ENCODE measurements at regions of chr15 and their contacts with region 1.

Region 1: GRCh38 chr15:74240002-74240568 is 4.0 kb downstream of the CCDC33 start:
- DNase-seq: peak; percentile 92
- H3K4me3 ChIP-seq: no peak overlapping the region
- H3K27ac ChIP-seq: peak overlapping the region; percentile 13
- H3K4me1 ChIP-seq: peaks cover 11% of the 10 kb centered on the region
- H3K27me3 ChIP-seq: no peaks in the 10 kb centered on the region
- CTCF ChIP-seq: peak; percentile 65 to 80
- POLR2A ChIP-seq: no peak

Region 2: DNA sequence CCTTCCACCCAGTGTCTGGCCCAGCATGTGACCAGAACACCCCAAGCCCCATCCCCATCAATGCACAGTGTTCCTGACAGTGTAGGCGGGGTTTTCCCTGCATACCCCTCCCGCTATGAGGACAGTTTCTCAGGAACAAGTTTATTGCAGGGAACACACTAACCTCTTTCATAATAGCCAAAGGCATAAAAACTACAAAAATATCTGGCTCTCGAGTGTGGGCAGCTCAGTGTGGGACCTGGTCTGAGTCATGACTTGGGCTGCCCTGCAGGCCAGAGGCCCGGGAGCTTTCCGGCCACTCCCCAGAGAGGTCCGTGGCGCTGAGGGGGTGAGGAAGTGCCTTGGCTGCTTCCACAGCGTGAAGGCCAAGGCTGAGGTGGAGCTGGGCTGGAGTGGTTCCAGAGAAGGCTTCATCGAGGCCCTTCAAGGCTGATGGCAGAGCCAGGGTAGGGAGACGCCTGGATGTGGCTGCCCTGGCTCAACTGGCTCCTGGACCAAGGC is 60.7 kb before region 1 on chr15:
- CTCF ChIA-PET with region 1: interaction called, 4 read pairs
- POLR2A ChIA-PET with region 1: no interaction called
- dilution Hi-C with region 1: no loop called
- intact Hi-C with region 1: loop called (anchors 5 kb)
- DNase-seq: peak; percentile 42
- H3K4me3 ChIP-seq: no peak overlapping the region
- H3K27ac ChIP-seq: peak overlapping the region; percentile 16
- H3K4me1 ChIP-seq: peaks cover 20% of the 10 kb centered on the region
- H3K27me3 ChIP-seq: no peaks in the 10 kb centered on the region
- CTCF ChIP-seq: no peak
- POLR2A ChIP-seq: no peak

Region 3: DNA sequence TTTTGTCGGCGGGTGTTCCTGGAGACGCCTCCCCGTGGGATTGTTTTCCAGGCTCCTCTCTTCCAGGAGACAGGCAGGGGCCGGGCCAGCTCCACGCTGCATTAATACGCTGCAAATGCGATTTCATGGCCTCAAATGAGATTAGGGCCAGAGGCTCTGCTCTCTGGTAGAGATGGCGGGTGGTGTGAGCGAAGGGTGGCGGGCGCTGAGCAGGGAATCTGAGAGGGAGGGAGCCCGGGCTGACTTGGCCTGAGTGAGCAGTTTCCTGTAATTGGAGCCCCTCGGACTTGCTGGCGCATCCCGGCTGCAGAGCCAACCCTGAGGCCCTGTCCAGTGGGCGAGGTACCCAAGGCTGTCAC is 11.4 kb before region 1 on chr15:
- CTCF ChIA-PET with region 1: interaction called, 13 read pairs
- POLR2A ChIA-PET with region 1: interaction called, 3 read pairs
- dilution Hi-C with region 1: no loop called
- intact Hi-C with region 1: no loop called
- DNase-seq: no peak
- H3K4me3 ChIP-seq: no peak overlapping the region
- H3K27ac ChIP-seq: no peak overlapping the region
- H3K4me1 ChIP-seq: no peaks in the 10 kb centered on the region
- H3K27me3 ChIP-seq: peaks cover 9 to 16% of the 10 kb centered on the region in 2 experiments
- CTCF ChIP-seq: no peak
- POLR2A ChIP-seq: no peak

Region 4: DNA sequence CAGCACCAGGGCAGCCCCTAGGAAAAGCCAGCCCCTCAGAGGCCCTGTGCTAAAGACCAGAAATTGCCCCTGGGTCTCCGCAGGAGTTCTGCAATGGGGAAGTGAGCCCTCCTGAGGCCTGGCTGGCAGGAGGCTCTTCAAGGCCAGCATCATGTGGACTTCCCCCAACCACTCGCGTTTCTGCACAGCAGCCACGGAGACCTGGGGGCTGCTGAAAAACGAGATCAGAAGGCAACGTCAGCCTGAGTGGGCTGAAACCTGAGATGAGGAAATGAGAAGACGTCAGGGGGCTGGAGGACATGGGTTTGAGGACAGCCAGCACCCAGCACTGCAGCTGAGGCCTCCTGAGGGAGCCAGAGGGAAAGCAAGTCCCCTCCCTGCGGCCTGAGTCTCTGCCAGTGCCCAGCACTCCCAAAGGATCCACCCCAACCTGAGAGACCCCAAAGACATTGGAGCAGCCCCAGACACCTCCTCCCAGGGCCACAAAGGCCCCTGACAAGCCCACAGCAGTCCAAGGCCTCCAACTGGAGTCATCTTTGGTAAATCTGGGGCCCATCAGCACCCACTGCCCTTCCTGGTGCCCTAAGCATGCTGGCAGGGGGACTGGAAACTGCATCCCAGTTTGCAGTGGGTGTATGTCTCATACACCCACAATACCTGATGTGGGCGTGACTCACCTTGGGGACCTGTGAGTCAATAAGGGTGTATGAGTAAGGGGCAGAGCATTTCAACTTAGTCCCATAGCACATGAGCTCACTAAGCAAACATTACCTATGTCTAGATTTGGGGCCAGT is 156.6 kb after region 1 on chr15:
- CTCF ChIA-PET with region 1: no interaction called
- POLR2A ChIA-PET with region 1: no interaction called
- dilution Hi-C with region 1: no loop called
- intact Hi-C with region 1: no loop called
- DNase-seq: no peak
- H3K4me3 ChIP-seq: no peak overlapping the region
- H3K27ac ChIP-seq: no peak overlapping the region
- H3K4me1 ChIP-seq: peaks cover 3% of the 10 kb centered on the region
- H3K27me3 ChIP-seq: peaks cover 0 to under 1% of the 10 kb centered on the region in 2 experiments
- CTCF ChIP-seq: no peak
- POLR2A ChIP-seq: no peak